ENCODE measurements at regions of chr12 and their contacts with region 1.

Region 1: GRCh38 chr12:99658671-99659349 is 11.3 kb downstream of the GARIN6 start:
- DNase-seq: no peak
- ATAC-seq: no peak
- H3K4me3 ChIP-seq: no peak overlapping the region
- H3K4me3 Mint-ChIP-seq: no peak overlapping the region
- H3K27ac ChIP-seq: no peak overlapping the region
- H3K27ac Mint-ChIP-seq: no peak overlapping the region
- H3K4me1 ChIP-seq: no peaks in the 10 kb centered on the region
- H3K4me1 Mint-ChIP-seq: no peaks in the 10 kb centered on the region
- H3K27me3 ChIP-seq: no peaks in the 10 kb centered on the region
- H3K27me3 Mint-ChIP-seq: no peaks in the 10 kb centered on the region

Region 2: GRCh38 chr12:99686142-99686541 is 27.3 kb after region 1 on chr12:
- CTCF ChIA-PET with region 1: no interaction called
- POLR2A ChIA-PET with region 1: interaction called in 1 of 2 experiments, 11 read pairs
- DNase-seq: no peak
- ATAC-seq: no peak
- H3K4me3 ChIP-seq: no peak overlapping the region
- H3K4me3 Mint-ChIP-seq: no peak overlapping the region
- H3K27ac ChIP-seq: no peak overlapping the region
- H3K27ac Mint-ChIP-seq: no peak overlapping the region
- H3K4me1 ChIP-seq: no peaks in the 10 kb centered on the region
- H3K4me1 Mint-ChIP-seq: no peaks in the 10 kb centered on the region
- H3K27me3 ChIP-seq: no peaks in the 10 kb centered on the region
- H3K27me3 Mint-ChIP-seq: no peaks in the 10 kb centered on the region